ENCODE measurements at regions of chr2 and their contacts with region 1.

Region 1: GRCh38 chr2:172623249-172623965 is 67.5 kb downstream of the PDK1 start:
- DNase-seq: no peak
- H3K4me3 Mint-ChIP-seq: no peak overlapping the region
- H3K27ac Mint-ChIP-seq: no peak overlapping the region
- H3K4me1 Mint-ChIP-seq: no peaks in the 10 kb centered on the region
- H3K27me3 Mint-ChIP-seq: no peaks in the 10 kb centered on the region

Region 2: GRCh38 chr2:172013396-172013795 is 610.0 kb before region 1 on chr2:
- CTCF ChIA-PET with region 1: no interaction called
- POLR2A ChIA-PET with region 1: no interaction called
- DNase-seq: no peak
- H3K4me3 Mint-ChIP-seq: no peak overlapping the region
- H3K27ac Mint-ChIP-seq: no peak overlapping the region
- H3K4me1 Mint-ChIP-seq: peaks cover 29% of the 10 kb centered on the region
- H3K27me3 Mint-ChIP-seq: no peaks in the 10 kb centered on the region

Region 3: DNA sequence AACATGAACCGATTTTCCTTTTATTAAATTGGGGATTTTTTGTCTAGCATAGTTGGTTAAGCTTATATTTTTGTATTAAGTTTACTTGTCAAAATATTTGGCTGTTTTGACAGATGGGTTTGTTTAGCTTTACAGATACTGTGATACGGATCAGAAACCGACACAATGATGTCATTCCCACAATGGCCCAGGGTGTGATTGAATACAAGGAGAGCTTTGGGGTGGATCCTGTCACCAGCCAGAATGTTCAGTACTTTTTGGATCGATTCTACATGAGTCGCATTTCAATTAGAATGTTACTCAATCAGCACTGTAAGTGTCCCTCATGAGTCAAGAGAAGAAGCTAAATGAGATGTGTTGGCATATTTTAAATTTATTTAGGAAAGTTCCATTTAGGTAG is 59.0 kb before region 1 on chr2:
- CTCF ChIA-PET with region 1: no interaction called
- POLR2A ChIA-PET with region 1: no interaction called
- DNase-seq: no peak
- H3K4me3 Mint-ChIP-seq: no peak overlapping the region
- H3K27ac Mint-ChIP-seq: no peak overlapping the region
- H3K4me1 Mint-ChIP-seq: peaks cover 3% of the 10 kb centered on the region
- H3K27me3 Mint-ChIP-seq: no peaks in the 10 kb centered on the region

Region 4: GRCh38 chr2:172639823-172640222 is 16.4 kb after region 1 on chr2:
- CTCF ChIA-PET with region 1: no interaction called
- POLR2A ChIA-PET with region 1: interaction called, 18 read pairs
- DNase-seq: no peak
- H3K4me3 Mint-ChIP-seq: no peak overlapping the region
- H3K27ac Mint-ChIP-seq: no peak overlapping the region
- H3K4me1 Mint-ChIP-seq: peaks cover 7% of the 10 kb centered on the region
- H3K27me3 Mint-ChIP-seq: no peaks in the 10 kb centered on the region